CD8-positive, alpha-beta T cell (primary cell): ENCODE measurements at regions of chr19 and their contacts with region 1.

Region 1: GRCh38 chr19:57819475-57820148 is 4.9 kb upstream of the ZNF552 start:
- DNase-seq: peak; percentile 60 to 95 (median 81)
- ATAC-seq: peak; percentile 83
- H3K4me3 ChIP-seq: peak overlapping the region; percentile 57 to 85
- H3K4me3 Mint-ChIP-seq: peak overlapping the region; percentile 96
- H3K27ac ChIP-seq: peak overlapping the region; percentile 81 to 89
- H3K27ac Mint-ChIP-seq: peak overlapping the region; percentile 97
- H3K4me1 ChIP-seq: peaks cover 15% of the 10 kb centered on the region
- H3K4me1 Mint-ChIP-seq: peaks cover 63% of the 10 kb centered on the region
- H3K27me3 ChIP-seq: no peaks in the 10 kb centered on the region
- H3K27me3 Mint-ChIP-seq: no peaks in the 10 kb centered on the region
- CTCF ChIP-seq: no peak

Region 2: GRCh38 chr19:57410877-57411671 is 408.5 kb before region 1 on chr19 and contains the start of gene ZNF17:
- CTCF ChIA-PET with region 1: no interaction called
- POLR2A ChIA-PET with region 1: no interaction called
- intact Hi-C with region 1: loop called in 1 of 2 experiments (anchors 5 kb)
- DNase-seq: peak; percentile 83 to 96 (median 91)
- ATAC-seq: peak; percentile 100
- H3K4me3 ChIP-seq: peak within 1 kb of the TSS; percentile 82 to 99
- H3K4me3 Mint-ChIP-seq: peak within 1 kb of the TSS; percentile 96
- H3K27ac ChIP-seq: peak within 1 kb of the TSS; percentile 67 to 83
- H3K27ac Mint-ChIP-seq: peak within 1 kb of the TSS; percentile 94
- H3K4me1 ChIP-seq: peaks cover 13% of the 10 kb centered on the region
- H3K4me1 Mint-ChIP-seq: peaks cover 35% of the 10 kb centered on the region
- H3K27me3 ChIP-seq: no peaks in the 10 kb centered on the region
- H3K27me3 Mint-ChIP-seq: no peaks in the 10 kb centered on the region
- CTCF ChIP-seq: no peak
- total RNA-seq, gene ZNF17: 15.5 to 18.3 TPM

Region 3: DNA sequence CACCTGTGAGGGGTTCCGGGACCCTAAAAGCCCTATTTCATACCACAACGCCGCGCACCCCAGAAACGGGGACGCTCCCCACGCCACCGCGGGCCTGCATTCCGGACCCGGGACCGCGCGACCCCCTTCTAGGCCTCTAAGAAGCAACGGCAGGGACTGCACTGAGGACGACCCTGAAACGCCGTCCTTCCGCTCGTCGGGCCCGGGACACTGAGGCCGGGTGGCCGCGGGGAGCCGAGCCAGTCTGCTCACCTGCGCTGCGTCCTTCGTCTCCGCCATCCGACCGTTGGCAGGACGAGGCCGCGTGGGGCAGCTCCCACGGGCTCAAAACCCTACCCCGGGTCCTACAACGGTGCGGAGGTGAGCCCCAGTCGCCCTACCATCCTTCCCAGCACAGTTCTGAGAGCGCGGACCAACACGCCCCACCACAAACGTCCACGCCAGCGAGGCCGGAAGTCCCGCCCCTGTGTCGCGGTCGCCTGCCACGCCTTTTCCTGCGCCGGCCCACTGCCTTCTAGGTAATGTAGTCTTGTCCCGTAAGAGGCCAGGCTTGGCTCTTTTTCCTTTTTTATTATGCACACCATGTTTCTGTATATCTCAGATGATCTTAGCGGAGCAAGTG is 260.1 kb before region 1 on chr19 and contains the start of gene ZNF550:
- CTCF ChIA-PET with region 1: no interaction called
- POLR2A ChIA-PET with region 1: no interaction called
- intact Hi-C with region 1: loop called in 1 of 2 experiments (anchors 5 kb)
- DNase-seq: peak; percentile 74 to 92 (median 88)
- ATAC-seq: peak; percentile 96
- H3K4me3 ChIP-seq: peak within 1 kb of the TSS; percentile 77 to 89
- H3K4me3 Mint-ChIP-seq: peak within 1 kb of the TSS; percentile 98
- H3K27ac ChIP-seq: peak within 1 kb of the TSS; percentile 64 to 70
- H3K27ac Mint-ChIP-seq: peak within 1 kb of the TSS; percentile 96
- H3K4me1 ChIP-seq: peaks cover 20% of the 10 kb centered on the region
- H3K4me1 Mint-ChIP-seq: peaks cover 32% of the 10 kb centered on the region
- H3K27me3 ChIP-seq: no peaks in the 10 kb centered on the region
- H3K27me3 Mint-ChIP-seq: no peaks in the 10 kb centered on the region
- CTCF ChIP-seq: no peak
- total RNA-seq, gene ZNF550: 15.4 to 17.6 TPM

Region 4: GRCh38 chr19:57746580-57747471 is 72.8 kb before region 1 on chr19 and contains the start of gene ZNF776:
- CTCF ChIA-PET with region 1: no interaction called
- POLR2A ChIA-PET with region 1: no interaction called
- intact Hi-C with region 1: loop called (anchors 1 to 2 kb)
- DNase-seq: peak; percentile 63 to 93 (median 84)
- ATAC-seq: peak; percentile 96
- H3K4me3 ChIP-seq: peak within 1 kb of the TSS; percentile 75 to 84
- H3K4me3 Mint-ChIP-seq: peak within 1 kb of the TSS; percentile 95
- H3K27ac ChIP-seq: peak within 1 kb of the TSS; percentile 71 to 80
- H3K27ac Mint-ChIP-seq: peak within 1 kb of the TSS; percentile 98
- H3K4me1 ChIP-seq: peaks cover 16% of the 10 kb centered on the region
- H3K4me1 Mint-ChIP-seq: peaks cover 41% of the 10 kb centered on the region
- H3K27me3 ChIP-seq: no peaks in the 10 kb centered on the region
- H3K27me3 Mint-ChIP-seq: no peaks in the 10 kb centered on the region
- CTCF ChIP-seq: no peak
- total RNA-seq, gene ZNF776: 22.3 to 32.3 TPM

Region 5: GRCh38 chr19:57769345-57770131 is 50.1 kb before region 1 on chr19 and contains the start of gene ZNF586:
- CTCF ChIA-PET with region 1: interaction called, 3 read pairs
- POLR2A ChIA-PET with region 1: interaction called, 7 read pairs
- intact Hi-C with region 1: loop called (anchors 1 kb)
- DNase-seq: peak; percentile 64 to 94 (median 86)
- ATAC-seq: peak; percentile 99
- H3K4me3 ChIP-seq: peak within 1 kb of the TSS; percentile 73 to 90
- H3K4me3 Mint-ChIP-seq: peak within 1 kb of the TSS; percentile 94
- H3K27ac ChIP-seq: peak within 1 kb of the TSS; percentile 61 to 86
- H3K27ac Mint-ChIP-seq: peak within 1 kb of the TSS; percentile 97
- H3K4me1 ChIP-seq: peaks cover 17% of the 10 kb centered on the region
- H3K4me1 Mint-ChIP-seq: peaks cover 35% of the 10 kb centered on the region
- H3K27me3 ChIP-seq: no peaks in the 10 kb centered on the region
- H3K27me3 Mint-ChIP-seq: no peaks in the 10 kb centered on the region
- CTCF ChIP-seq: no peak
- total RNA-seq, gene ZNF586: 54.0 to 57.6 TPM

Region 6: GRCh38 chr19:57850553-57851017 is 31.0 kb after region 1 on chr19:
- CTCF ChIA-PET with region 1: interaction called, 4 read pairs
- POLR2A ChIA-PET with region 1: interaction called, 4 read pairs
- intact Hi-C with region 1: loop called in 1 of 2 experiments (anchors 1 kb)
- DNase-seq: peak in 2 of 9 experiments; percentile 8 to 12
- ATAC-seq: no peak
- H3K4me3 ChIP-seq: peak overlapping the region; percentile 68 to 85
- H3K4me3 Mint-ChIP-seq: peak overlapping the region; percentile 93
- H3K27ac ChIP-seq: peak overlapping the region; percentile 78 to 82
- H3K27ac Mint-ChIP-seq: peak overlapping the region; percentile 96
- H3K4me1 ChIP-seq: peaks cover 16% of the 10 kb centered on the region
- H3K4me1 Mint-ChIP-seq: peaks cover 33% of the 10 kb centered on the region
- H3K27me3 ChIP-seq: no peaks in the 10 kb centered on the region
- H3K27me3 Mint-ChIP-seq: no peaks in the 10 kb centered on the region
- CTCF ChIP-seq: no peak

Region 7: DNA sequence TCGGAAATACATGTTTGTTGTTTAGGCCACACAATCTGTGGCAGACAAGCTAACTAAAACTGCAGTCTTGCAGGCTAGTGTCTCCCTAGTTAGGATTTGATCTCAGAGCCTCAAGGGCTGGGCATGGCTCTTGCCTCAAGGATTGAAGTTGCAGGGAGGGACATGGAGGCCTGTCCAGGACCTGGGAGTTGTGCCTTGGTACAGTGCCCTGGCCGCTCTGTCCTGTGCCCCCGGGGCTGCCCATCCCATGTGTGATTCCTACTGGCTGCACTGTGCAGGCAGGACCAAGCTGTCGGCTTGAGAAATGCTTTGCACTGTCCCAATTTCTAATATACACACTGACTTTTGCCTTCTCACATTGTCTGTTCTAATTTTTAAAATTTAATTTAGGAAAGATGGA is 135.4 kb after region 1 on chr19:
- CTCF ChIA-PET with region 1: no interaction called
- POLR2A ChIA-PET with region 1: no interaction called
- intact Hi-C with region 1: no loop called
- DNase-seq: no peak
- ATAC-seq: no peak
- H3K4me3 ChIP-seq: no peak overlapping the region
- H3K4me3 Mint-ChIP-seq: no peak overlapping the region
- H3K27ac ChIP-seq: no peak overlapping the region
- H3K27ac Mint-ChIP-seq: no peak overlapping the region
- H3K4me1 ChIP-seq: no peaks in the 10 kb centered on the region
- H3K4me1 Mint-ChIP-seq: no peaks in the 10 kb centered on the region
- H3K27me3 ChIP-seq: no peaks in the 10 kb centered on the region
- H3K27me3 Mint-ChIP-seq: peaks cover 5% of the 10 kb centered on the region
- CTCF ChIP-seq: no peak

Region 8: GRCh38 chr19:58002384-58003173 is 183.0 kb after region 1 on chr19 and contains the start of gene ZNF606:
- CTCF ChIA-PET with region 1: no interaction called
- POLR2A ChIA-PET with region 1: interaction called, 3 read pairs
- intact Hi-C with region 1: loop called in 1 of 2 experiments (anchors 2 kb)
- DNase-seq: peak; percentile 72 to 93 (median 84)
- ATAC-seq: peak; percentile 94
- H3K4me3 ChIP-seq: peak within 1 kb of the TSS; percentile 90 to 93
- H3K4me3 Mint-ChIP-seq: peak within 1 kb of the TSS; percentile 87
- H3K27ac ChIP-seq: peak within 1 kb of the TSS; percentile 82 to 93
- H3K27ac Mint-ChIP-seq: peak within 1 kb of the TSS; percentile 94
- H3K4me1 ChIP-seq: peaks cover 20% of the 10 kb centered on the region
- H3K4me1 Mint-ChIP-seq: peaks cover 34% of the 10 kb centered on the region
- H3K27me3 ChIP-seq: no peaks in the 10 kb centered on the region
- H3K27me3 Mint-ChIP-seq: no peaks in the 10 kb centered on the region
- CTCF ChIP-seq: no peak
- total RNA-seq, gene ZNF606: 11.2 to 13.0 TPM